PC-9 (cell line): ENCODE measurements at regions of chr9 and their contacts with region 1.

Region 1: GRCh38 chr9:114551883-114552685 is 35.5 kb upstream of the ATP6V1G1 start:
- DNase-seq: peak; percentile 89 to 96
- H3K4me3 ChIP-seq: peak overlapping the region; percentile 2; the same call in 1 of the 2 replicates
- H3K27ac ChIP-seq: peak overlapping the region; percentile 88
- H3K4me1 ChIP-seq: peaks cover 28% of the 10 kb centered on the region
- H3K27me3 ChIP-seq: no peaks in the 10 kb centered on the region
- CTCF ChIP-seq: no peak

Region 2: GRCh38 chr9:114518599-114519022 is 33.5 kb before region 1 on chr9:
- CTCF ChIA-PET with region 1: no interaction called
- POLR2A ChIA-PET with region 1: no interaction called
- intact Hi-C with region 1: no loop called
- DNase-seq: no peak
- H3K4me3 ChIP-seq: no peak overlapping the region
- H3K27ac ChIP-seq: no peak overlapping the region
- H3K4me1 ChIP-seq: no peaks in the 10 kb centered on the region; the same call in 1 of the 2 replicates
- H3K27me3 ChIP-seq: no peaks in the 10 kb centered on the region
- CTCF ChIP-seq: no peak

Region 3: DNA sequence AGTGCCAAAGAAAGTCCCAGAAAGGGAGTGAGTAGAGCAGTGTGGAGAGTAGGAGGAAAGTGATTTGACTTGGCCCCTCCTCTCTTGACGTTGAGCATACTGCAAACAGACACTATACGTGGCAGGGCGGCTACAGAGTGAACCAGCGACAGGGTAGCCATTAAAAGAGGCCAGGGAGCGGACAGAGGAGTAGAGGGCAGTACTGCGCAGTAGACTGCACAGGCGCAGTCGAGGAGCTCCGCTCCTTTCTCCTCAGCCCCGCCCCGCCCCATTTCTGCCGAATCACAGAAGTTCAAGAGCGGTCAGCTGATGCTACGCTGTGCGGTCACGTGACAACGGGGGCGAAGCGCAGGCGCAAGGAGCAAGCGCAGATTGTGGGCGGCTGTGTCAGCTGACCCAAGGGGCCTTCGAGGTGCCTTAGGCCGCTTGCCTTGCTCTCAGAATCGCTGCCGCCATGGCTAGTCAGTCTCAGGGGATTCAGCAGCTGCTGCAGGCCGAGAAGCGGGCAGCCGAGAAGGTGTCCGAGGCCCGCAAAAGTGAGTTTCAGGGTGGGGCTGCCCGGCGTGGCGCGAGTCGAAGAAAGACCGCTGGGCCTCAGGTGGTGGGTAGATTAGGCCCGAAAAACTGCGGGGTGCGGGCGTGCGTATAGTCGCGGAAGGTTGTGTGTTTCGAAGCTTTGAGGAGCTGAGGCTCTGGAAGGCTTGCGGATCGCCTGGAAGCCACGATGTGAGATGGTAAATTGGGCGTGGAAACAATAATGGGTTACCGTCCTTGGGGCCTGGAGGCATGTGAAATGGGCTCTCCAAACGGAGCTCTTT is 35.5 kb after region 1 on chr9 and contains the start of gene ATP6V1G1:
- CTCF ChIA-PET with region 1: interaction called, 5 read pairs
- POLR2A ChIA-PET with region 1: interaction called, 16 read pairs
- intact Hi-C with region 1: loop called (anchors 2 kb)
- DNase-seq: peak; percentile 97 to 99
- H3K4me3 ChIP-seq: peak within 1 kb of the TSS; percentile 78
- H3K27ac ChIP-seq: peak within 1 kb of the TSS; percentile 82
- H3K4me1 ChIP-seq: peaks cover 20% of the 10 kb centered on the region
- H3K27me3 ChIP-seq: no peaks in the 10 kb centered on the region
- CTCF ChIP-seq: no peak
- total RNA-seq, gene ATP6V1G1: 81.9 and 90.6 TPM in 2 replicates